PC-3 (cell line): ENCODE measurements at regions of chr2 and their contacts with region 1.

Region 1: DNA sequence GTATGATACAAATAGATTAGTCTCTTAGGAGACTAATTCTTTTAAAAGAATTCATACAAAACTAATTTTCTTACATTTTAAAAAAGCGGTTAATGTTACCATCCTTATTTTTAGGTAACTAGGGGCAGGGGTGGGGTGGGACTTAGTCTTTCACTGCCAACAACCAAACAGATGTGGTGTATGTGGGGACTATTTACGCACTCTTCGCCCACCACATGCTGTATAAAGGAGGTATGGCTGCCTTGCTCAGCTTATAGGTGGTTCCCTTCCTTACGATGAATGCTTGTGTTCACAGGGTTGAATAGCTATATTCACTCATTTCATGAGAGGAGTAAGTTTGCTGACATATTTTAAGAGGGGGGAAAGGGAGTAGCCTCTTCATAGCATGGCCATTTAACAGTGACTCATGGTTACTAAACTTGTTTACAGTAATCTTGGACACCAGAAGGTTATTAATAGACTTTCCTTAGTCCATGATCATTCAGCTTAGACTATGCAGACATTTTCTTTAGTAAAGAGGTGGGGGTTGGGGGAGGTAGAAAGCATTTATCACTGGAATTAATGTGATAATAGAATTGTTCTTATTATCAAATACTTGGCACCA is 61.8 kb downstream of the CAB39 start:
- DNase-seq: peak; percentile 90
- ATAC-seq: peak; percentile 88
- H3K4me3 ChIP-seq: peak overlapping the region; percentile 38; the same call in 1 of the 2 replicates
- H3K27ac ChIP-seq: peak overlapping the region; percentile 97
- H3K4me1 ChIP-seq: peaks cover 59% of the 10 kb centered on the region
- H3K27me3 ChIP-seq: no peaks in the 10 kb centered on the region
- CTCF ChIP-seq: no peak

Region 2: GRCh38 chr2:229980431-229981184 is 793.8 kb before region 1 on chr2:
- CTCF ChIA-PET with region 1: no interaction called
- POLR2A ChIA-PET with region 1: no interaction called
- intact Hi-C with region 1: no loop called
- DNase-seq: peak; percentile 23
- ATAC-seq: peak; percentile 71
- H3K4me3 ChIP-seq: no peak overlapping the region
- H3K27ac ChIP-seq: no peak overlapping the region
- H3K4me1 ChIP-seq: 0 out of 2 replicates have a peak, but pooled peaks cover 4% of the 10 kb centered on the region
- H3K27me3 ChIP-seq: no peaks in the 10 kb centered on the region
- CTCF ChIP-seq: no peak

Region 3: DNA sequence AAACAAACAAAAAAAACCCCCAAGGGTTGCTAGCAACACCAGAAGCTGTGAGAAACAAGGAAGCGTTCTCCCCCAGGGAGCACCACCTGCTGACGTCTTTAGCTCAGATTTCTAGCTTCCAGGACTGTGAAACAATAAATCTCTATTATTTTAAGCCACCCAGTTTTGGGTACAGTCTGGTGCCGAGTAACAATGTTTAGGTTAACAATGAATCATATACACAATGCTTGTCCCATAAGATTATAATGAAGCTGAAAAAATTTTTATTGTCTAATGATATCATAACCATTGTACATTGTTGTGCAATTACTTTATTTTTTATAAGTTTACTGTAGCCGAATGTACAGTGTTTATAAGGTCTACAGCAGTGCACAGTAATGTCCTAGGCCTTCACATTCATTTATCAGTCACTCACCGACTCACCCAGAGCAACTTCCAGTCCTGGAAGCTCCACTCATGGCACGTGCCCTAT is 133.9 kb before region 1 on chr2:
- CTCF ChIA-PET with region 1: no interaction called
- POLR2A ChIA-PET with region 1: no interaction called
- intact Hi-C with region 1: loop called (anchors 1 kb)
- DNase-seq: peak; percentile 86
- ATAC-seq: peak; percentile 97
- H3K4me3 ChIP-seq: no peak overlapping the region
- H3K27ac ChIP-seq: peak overlapping the region; percentile 79
- H3K4me1 ChIP-seq: peaks cover 13% of the 10 kb centered on the region
- H3K27me3 ChIP-seq: no peaks in the 10 kb centered on the region
- CTCF ChIP-seq: no peak

Region 4: DNA sequence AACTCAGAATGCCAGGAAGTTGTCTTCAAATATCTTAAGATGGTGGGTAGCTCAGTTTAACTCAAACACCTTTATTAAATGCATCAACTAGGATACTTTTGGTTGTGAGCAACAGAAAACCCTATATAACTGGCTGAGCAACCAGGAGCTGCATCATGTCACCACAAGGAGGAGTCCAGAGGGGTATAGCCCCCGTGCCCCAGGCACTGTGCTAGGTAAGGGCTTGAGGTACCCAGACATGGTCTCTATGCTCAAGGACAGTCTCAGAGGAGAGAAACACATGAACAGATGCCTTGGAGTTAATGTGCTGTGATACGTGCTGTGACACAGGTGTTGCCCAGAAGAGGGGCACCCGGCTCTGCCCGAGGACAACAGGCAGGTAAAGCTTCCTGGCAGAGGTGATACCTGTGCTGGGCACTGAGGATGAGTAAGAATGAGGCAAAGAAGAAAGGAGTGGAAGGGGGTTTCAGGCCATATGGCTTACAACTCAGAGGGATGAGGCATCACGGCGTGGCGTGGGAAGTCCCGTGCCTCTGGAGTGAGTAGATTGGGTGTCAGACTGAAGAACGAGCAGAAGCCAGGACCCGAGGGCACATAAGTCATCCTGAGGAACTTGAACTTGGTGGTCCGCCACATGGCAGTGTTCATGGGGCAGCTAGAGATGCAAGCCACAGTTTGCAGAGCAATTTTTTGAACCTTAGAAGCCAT is 93.8 kb before region 1 on chr2:
- CTCF ChIA-PET with region 1: no interaction called
- POLR2A ChIA-PET with region 1: no interaction called
- intact Hi-C with region 1: no loop called
- DNase-seq: peak; percentile 70
- ATAC-seq: peak; percentile 37
- H3K4me3 ChIP-seq: no peak overlapping the region
- H3K27ac ChIP-seq: peak overlapping the region; percentile 45
- H3K4me1 ChIP-seq: peaks cover 44% of the 10 kb centered on the region
- H3K27me3 ChIP-seq: no peaks in the 10 kb centered on the region
- CTCF ChIP-seq: peak; percentile 52

Region 5: DNA sequence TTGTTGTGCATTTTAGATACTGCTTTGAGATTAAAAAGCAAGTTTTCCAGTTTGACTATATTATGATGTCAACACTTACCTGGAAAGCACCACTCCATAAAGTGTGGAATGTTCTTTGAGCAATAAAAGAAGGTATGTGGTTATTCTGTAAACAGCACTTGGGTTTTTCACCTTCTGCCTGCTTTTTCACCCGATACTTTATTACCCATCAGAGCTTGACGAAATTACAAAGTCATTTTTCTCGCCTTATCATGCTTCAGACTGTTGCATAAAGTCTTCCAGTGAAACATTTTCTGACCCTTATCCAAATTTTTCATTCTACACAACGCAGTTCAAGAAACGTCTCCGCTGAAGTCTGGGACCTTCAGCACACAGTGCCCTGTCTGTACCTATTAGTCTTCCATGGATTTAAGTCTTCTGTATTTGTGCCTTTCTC is 36.6 kb before region 1 on chr2:
- CTCF ChIA-PET with region 1: no interaction called
- POLR2A ChIA-PET with region 1: interaction called, 3 read pairs
- intact Hi-C with region 1: loop called (anchors 1 kb)
- DNase-seq: peak; percentile 85
- ATAC-seq: peak; percentile 48
- H3K4me3 ChIP-seq: peak overlapping the region; percentile 53
- H3K27ac ChIP-seq: peak overlapping the region; percentile 95
- H3K4me1 ChIP-seq: peaks cover 60% of the 10 kb centered on the region
- H3K27me3 ChIP-seq: no peaks in the 10 kb centered on the region
- CTCF ChIP-seq: no peak

Region 6: GRCh38 chr2:230758566-230759480 is 15.6 kb before region 1 on chr2:
- CTCF ChIA-PET with region 1: interaction called, 3 read pairs
- POLR2A ChIA-PET with region 1: no interaction called
- intact Hi-C with region 1: loop called (anchors 2 kb)
- DNase-seq: no peak
- ATAC-seq: no peak
- H3K4me3 ChIP-seq: no peak overlapping the region
- H3K27ac ChIP-seq: peak overlapping the region; percentile 12; the same call in 1 of the 2 replicates
- H3K4me1 ChIP-seq: peaks cover 35% of the 10 kb centered on the region
- H3K27me3 ChIP-seq: no peaks in the 10 kb centered on the region
- CTCF ChIP-seq: no peak

Region 7: DNA sequence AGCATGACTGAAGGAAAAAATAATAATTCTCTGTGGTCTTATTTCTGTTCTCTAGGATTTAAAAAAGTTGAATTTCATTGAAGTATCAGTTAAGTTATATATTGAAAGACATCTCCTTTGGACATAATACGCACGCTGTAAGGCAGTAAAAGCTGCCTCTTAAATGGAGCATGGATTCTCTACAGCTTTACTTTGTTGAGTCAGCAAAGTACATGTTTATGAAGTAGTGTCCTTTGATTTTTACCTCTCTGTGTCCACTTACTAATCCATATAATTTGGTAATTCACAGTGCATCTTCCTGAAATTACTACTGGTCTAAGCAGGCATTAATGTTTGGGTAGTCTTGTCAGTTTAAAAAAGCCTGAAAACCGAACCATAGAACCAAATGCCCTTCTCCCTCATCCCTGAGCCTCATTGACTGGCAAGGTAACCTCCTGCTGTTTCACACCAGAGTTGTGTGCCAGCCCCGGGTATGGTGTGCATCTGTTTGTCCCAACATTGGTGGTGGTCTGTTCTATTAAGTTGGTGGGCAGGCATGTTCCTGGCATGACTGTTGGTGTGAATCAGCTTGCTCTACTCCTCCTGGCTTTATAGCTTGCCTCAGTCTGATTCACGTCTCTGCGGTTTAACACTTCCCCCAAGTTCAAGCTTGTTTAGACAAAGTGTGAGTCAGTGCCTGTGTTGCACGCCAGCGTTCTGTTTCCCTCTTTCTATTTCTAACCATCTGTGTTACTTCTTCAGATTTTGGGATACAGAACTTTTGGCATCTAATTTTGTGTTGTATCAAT is 19.3 kb after region 1 on chr2:
- CTCF ChIA-PET with region 1: interaction called, 6 read pairs
- POLR2A ChIA-PET with region 1: interaction called, 8 read pairs
- intact Hi-C with region 1: loop called (anchors 1 kb)
- DNase-seq: peak; percentile 96
- ATAC-seq: peak; percentile 90
- H3K4me3 ChIP-seq: peak overlapping the region; percentile 52
- H3K27ac ChIP-seq: peak overlapping the region; percentile 98
- H3K4me1 ChIP-seq: peaks cover 63% of the 10 kb centered on the region
- H3K27me3 ChIP-seq: no peaks in the 10 kb centered on the region
- CTCF ChIP-seq: no peak

Region 8: GRCh38 chr2:230805353-230806017 is 31.0 kb after region 1 on chr2:
- CTCF ChIA-PET with region 1: no interaction called
- POLR2A ChIA-PET with region 1: no interaction called
- intact Hi-C with region 1: no loop called
- DNase-seq: no peak
- ATAC-seq: no peak
- H3K4me3 ChIP-seq: no peak overlapping the region
- H3K27ac ChIP-seq: no peak overlapping the region
- H3K4me1 ChIP-seq: no peaks in the 10 kb centered on the region
- H3K27me3 ChIP-seq: no peaks in the 10 kb centered on the region
- CTCF ChIP-seq: no peak